H1 (cell line): ENCODE measurements at regions of chr1 and their contacts with region 1.

Region 1: DNA sequence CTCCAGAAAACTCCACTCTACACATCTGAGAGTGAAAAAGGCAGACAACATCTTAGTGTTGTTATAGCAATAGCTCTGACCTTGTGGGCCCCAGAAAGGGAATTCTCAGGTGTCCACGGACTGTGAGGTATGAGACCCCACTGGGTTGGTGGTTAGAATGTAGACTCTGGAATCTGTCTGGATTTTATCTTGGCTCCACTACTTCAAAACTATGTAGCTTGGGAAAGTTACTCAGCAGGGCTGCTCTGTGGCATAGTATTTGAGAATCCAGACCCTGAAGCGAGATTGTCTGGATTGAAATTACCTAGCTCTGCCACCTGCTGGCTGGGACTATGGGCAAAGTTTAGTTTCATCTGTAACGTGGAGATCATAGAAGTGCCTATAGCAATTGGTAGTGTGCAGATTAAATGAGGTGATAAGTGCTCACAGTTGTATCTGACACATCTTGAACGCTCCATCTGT is 25.8 kb downstream of the PRDM2 start:
- DNase-seq: no peak
- H3K4me3 ChIP-seq: no peak overlapping the region
- H3K27ac ChIP-seq: no peak overlapping the region
- H3K4me1 ChIP-seq: peaks cover 0 to 8% (median under 1%) of the 10 kb centered on the region in 4 experiments; a peak in 1 of 7 replicates
- H3K27me3 ChIP-seq: peaks cover 32 to 61% (median 47%) of the 10 kb centered on the region in 4 experiments
- CTCF ChIP-seq: peak in 2 of 3 experiments; percentile 28 to 41; a peak in 2 of 4 replicates
- EP300 ChIP-seq: no peak
- POLR2A ChIP-seq: no peak
- RAD21 ChIP-seq: peak; percentile 45 to 50; a peak in 3 of 4 replicates

Region 2: GRCh38 chr1:13662493-13662892 is 63.3 kb before region 1 on chr1:
- CTCF ChIA-PET with region 1: interaction called, 27 read pairs
- POLR2A ChIA-PET with region 1: no interaction called
- DNase-seq: no peak
- H3K4me3 ChIP-seq: no peak overlapping the region
- H3K27ac ChIP-seq: no peak overlapping the region
- H3K4me1 ChIP-seq: no peaks in the 10 kb centered on the region
- H3K27me3 ChIP-seq: no peaks in the 10 kb centered on the region
- CTCF ChIP-seq: no peak
- EP300 ChIP-seq: no peak
- POLR2A ChIP-seq: no peak
- RAD21 ChIP-seq: no peak

Region 3: DNA sequence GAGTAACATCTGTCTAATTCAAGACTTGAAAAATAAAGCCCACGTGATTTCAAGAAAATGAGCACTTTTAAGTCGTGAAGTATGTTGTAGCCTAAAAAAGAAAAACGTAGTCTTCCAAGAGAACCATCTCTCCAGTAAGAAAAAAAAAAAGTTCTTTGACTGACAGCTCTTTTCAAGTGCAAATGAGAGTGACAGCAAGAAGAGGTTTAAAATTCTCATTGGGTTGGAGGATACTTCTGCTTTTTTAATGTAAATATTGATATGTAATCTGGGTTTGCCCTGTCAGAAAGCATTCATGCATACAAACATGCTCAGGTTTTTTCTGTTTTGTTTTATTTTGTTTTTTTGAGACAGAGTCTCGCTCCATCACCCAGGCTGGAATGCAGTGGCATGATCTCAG is 58.1 kb before region 1 on chr1:
- CTCF ChIA-PET with region 1: interaction called, 27 read pairs
- POLR2A ChIA-PET with region 1: no interaction called
- DNase-seq: no peak
- H3K4me3 ChIP-seq: no peak overlapping the region
- H3K27ac ChIP-seq: no peak overlapping the region
- H3K4me1 ChIP-seq: no peaks in the 10 kb centered on the region
- H3K27me3 ChIP-seq: no peaks in the 10 kb centered on the region
- CTCF ChIP-seq: no peak
- EP300 ChIP-seq: no peak
- POLR2A ChIP-seq: no peak
- RAD21 ChIP-seq: no peak

Region 4: DNA sequence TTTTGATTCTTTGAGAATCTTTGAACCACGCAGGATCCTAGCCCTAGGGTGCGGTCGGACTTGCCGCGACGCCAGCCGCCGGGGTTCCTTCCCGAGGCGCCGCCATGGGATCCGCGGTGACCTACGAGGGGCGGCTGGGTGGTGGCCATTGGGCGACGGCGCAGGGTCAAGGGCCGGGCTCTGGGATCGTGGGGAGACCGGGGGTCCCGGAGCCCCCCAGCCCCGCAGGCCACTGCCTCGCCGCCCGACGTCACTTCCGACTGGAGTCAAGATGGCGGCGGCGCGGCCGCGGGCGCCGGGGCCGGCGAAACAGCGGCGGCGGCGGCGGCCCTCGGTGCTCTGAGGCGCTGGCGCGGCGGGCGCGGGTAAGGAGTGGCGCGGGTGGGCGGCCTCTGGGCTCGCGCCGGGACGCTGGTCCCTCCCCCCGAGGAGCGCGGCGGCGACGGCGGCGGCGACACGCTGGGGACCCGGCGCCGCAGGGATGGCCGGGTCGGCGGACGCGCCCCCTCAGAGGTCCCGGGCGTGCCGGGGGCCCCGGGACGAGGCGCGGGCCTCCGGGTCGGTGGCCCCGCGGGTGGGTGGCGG is 25.7 kb before region 1 on chr1 and contains the start of gene PRDM2:
- CTCF ChIA-PET with region 1: no interaction called
- POLR2A ChIA-PET with region 1: no interaction called
- DNase-seq: peak in 1 of 2 experiments; percentile 68
- H3K4me3 ChIP-seq: peak within 1 kb of the TSS; percentile 61 to 83 (median 66)
- H3K27ac ChIP-seq: no peak within 1 kb of the TSS; the same call in 1 of the 2 replicates
- H3K4me1 ChIP-seq: peaks cover 0 to 7% (median 2%) of the 10 kb centered on the region in 4 experiments; a peak in 3 of 7 replicates
- H3K27me3 ChIP-seq: peaks cover 1 to 18% (median 14%) of the 10 kb centered on the region in 4 experiments
- CTCF ChIP-seq: no peak
- EP300 ChIP-seq: no peak
- POLR2A ChIP-seq: 0 out of 3 replicates have a peak, but pooled peaks of 1 of the 2 experiments have one; percentile 31
- RAD21 ChIP-seq: no peak
- total RNA-seq, gene PRDM2: 20.2 and 21.2 TPM in 2 replicates

Region 5: GRCh38 chr1:13714851-13715250 is 10.9 kb before region 1 on chr1:
- CTCF ChIA-PET with region 1: interaction called, 13 read pairs
- POLR2A ChIA-PET with region 1: interaction called, 3 read pairs
- DNase-seq: no peak
- H3K4me3 ChIP-seq: no peak overlapping the region
- H3K27ac ChIP-seq: no peak overlapping the region
- H3K4me1 ChIP-seq: no peaks in the 10 kb centered on the region
- H3K27me3 ChIP-seq: no peaks in the 10 kb centered on the region; a peak in 1 of 7 replicates
- CTCF ChIP-seq: no peak
- EP300 ChIP-seq: no peak
- POLR2A ChIP-seq: no peak
- RAD21 ChIP-seq: no peak

Region 6: DNA sequence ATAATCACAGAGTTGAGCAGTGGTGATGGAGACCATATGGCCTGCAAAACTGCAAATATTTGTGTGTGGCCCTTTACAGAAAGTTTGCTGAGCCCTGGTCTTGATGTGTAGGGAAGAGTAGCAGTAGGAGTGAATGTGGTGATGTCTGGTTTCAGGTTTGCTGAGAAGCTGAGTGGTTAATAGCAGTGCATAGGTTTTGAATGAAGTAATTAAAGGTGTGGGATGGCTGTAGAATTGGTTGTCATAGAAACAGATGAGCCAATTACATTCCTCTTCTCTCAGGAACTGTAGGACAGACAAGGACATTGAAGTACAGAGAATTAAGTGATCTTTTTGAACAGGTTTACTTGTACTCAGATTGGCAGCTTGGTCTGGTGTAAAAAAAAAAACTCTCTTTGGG is 11.7 kb after region 1 on chr1:
- CTCF ChIA-PET with region 1: interaction called, 13 read pairs
- POLR2A ChIA-PET with region 1: no interaction called
- DNase-seq: no peak
- H3K4me3 ChIP-seq: no peak overlapping the region
- H3K27ac ChIP-seq: no peak overlapping the region
- H3K4me1 ChIP-seq: no peaks in the 10 kb centered on the region
- H3K27me3 ChIP-seq: no peaks in the 10 kb centered on the region
- CTCF ChIP-seq: no peak
- EP300 ChIP-seq: no peak
- POLR2A ChIP-seq: no peak
- RAD21 ChIP-seq: no peak